BJ (cell line): ENCODE measurements at regions of chr17 and their contacts with region 1.

Region 1: DNA sequence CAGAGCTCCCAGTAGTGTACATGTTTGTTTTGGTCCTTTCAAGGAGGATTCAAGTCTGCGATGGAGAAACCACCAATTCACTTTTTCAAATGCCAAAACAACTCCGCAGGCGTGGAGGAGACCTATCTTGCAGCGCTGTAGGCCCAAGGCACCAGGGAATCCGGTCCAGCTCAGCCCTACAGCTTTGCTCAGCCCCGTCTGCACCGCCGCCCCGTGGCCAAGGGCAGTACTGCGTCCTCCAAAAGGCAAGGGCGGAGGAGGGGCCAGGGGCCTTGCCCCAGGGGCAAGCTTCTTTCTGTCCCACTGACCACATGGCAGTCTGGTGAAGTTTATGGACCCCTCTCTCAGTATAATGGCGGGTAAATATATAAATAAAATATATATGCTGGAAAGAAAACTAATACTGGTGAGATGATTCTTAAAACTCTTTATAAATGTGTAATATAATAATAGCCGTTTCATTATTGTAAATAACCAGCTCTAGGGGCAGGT is 709 bp upstream of the CD300LG start:
- DNase-seq: no peak
- H3K4me3 ChIP-seq: no peak overlapping the region
- H3K27me3 ChIP-seq: peaks cover 10% of the 10 kb centered on the region
- CTCF ChIP-seq: peak; percentile 100

Region 2: GRCh38 chr17:43766413-43767052 is 79.7 kb before region 1 on chr17:
- CTCF ChIA-PET with region 1: interaction called, 24 read pairs
- POLR2A ChIA-PET with region 1: no interaction called
- DNase-seq: no peak
- H3K4me3 ChIP-seq: no peak overlapping the region
- H3K27me3 ChIP-seq: no peaks in the 10 kb centered on the region
- CTCF ChIP-seq: peak; percentile 86

Region 3: DNA sequence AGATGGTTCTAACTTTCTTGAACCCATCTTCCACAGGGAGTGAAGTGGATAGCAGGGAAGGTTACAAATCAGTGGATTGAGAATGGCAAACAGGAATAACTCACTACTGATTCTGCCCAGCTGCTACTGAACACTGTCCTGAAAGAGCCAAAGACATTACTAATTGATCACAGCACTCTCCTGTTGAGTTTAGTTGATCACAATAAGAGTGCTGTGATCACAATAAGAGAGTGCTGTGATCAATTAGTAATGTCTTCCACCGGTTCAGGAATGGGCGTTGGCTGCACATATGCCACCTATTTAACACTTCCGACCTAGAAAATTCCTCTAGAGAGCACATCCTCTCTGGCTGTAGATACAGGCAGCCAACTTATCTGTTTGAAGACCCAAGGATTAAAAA is 54.7 kb before region 1 on chr17:
- CTCF ChIA-PET with region 1: interaction called, 13 read pairs
- POLR2A ChIA-PET with region 1: no interaction called
- DNase-seq: no peak
- H3K4me3 ChIP-seq: no peak overlapping the region
- H3K27me3 ChIP-seq: peaks cover 5% of the 10 kb centered on the region
- CTCF ChIP-seq: no peak

Region 4: DNA sequence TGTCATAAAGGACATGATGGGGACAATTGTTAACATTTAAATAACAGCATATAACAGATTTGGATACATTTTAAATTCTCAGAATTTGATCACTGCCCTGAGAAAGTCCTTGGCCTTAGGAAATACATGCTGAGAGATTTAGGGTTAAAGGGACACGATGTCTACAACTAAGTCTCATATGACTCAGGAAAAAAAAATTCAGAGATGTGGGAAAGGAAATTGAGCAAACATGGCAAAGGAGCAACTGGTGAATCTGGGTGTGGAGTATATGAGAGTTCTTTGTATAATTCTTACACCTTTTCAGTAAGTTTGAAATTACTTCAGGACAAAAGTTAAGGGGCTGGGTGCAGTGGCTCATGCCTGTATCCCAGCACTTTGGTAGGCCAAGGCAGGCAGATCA is 31.6 kb before region 1 on chr17:
- CTCF ChIA-PET with region 1: interaction called, 10 read pairs
- POLR2A ChIA-PET with region 1: interaction called, 5 read pairs
- DNase-seq: peak; percentile 53
- H3K4me3 ChIP-seq: no peak overlapping the region
- H3K27me3 ChIP-seq: no peaks in the 10 kb centered on the region
- CTCF ChIP-seq: no peak

Region 5: DNA sequence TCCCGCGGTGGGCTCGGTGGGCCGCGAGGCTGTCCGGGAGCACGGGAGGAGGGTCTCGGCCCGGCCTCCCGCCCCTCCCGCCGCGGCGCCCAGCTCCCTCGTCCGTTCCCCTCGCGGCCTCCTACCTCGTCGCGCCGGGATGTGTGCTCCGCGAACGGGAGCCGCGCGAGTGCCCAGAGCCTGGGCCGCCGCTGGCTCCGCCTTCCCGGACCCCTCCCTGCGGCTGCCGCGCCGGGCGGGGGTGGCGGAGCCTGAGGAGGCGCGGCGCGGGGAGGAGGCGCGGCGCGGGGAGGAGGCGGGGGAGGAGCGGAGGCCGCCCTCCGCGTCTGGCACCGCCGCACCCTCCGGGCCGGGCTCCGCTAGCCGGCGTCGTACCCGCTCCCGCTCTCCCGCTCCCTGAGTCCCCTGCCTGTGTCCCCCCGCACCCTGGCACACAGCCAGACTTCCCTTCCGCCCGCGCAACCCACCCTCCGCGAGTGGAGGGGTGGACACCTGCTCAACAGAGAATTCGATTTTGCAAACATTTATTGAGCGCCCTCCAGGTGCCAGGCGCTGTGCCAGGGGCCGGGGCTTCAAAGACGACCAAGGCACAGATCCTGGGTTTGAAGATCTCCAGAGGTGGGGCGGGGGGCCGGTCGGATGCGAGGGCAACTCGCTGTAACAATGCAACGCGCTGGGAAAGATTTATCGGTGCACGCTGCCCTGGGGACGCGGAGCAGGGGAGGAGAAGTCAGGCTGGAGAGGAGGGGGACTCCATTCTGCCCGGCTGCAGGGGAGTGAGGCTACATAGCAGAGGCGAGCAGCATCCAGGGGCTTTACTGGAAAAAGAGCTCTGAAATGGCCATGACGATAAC is 13.1 kb before region 1 on chr17 and contains the start of gene MPP3:
- CTCF ChIA-PET with region 1: interaction called, 15 read pairs
- POLR2A ChIA-PET with region 1: no interaction called
- DNase-seq: no peak
- H3K4me3 ChIP-seq: peak within 1 kb of the TSS; percentile 64
- H3K27me3 ChIP-seq: no peaks in the 10 kb centered on the region
- CTCF ChIP-seq: no peak
- polyA plus RNA-seq, gene MPP3: 4.6 and 7.9 TPM in 2 replicates

Region 6: DNA sequence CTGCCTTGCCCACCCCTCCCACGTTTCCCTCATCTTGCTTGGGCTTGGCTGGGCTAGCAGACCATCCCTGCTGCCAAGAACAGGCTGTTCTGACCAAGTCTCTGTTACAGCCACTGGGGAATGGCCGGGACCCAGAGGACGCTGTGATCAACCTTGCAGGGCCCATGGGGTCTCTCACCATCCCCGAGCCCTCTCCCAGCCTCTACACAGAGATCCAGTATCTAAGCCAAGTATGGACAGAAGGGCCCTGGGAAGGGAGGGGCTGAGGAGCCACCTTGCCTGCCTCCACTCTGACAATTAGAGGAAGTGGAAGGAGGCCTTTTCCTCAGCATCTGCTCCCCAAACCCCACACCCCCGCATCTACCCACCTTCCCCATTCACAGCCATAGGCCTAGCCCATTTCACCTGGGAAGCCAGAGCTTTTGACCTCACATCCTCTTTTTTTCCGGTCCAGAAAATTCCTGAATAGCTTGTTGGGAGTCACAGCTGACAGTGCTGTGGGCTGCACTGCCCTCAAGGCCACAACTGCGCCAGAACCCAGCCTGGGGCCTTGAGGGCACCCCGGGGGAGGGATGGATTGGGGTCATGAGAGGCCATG is 14.9 kb after region 1 on chr17:
- CTCF ChIA-PET with region 1: interaction called, 63 read pairs
- POLR2A ChIA-PET with region 1: no interaction called
- DNase-seq: no peak
- H3K4me3 ChIP-seq: no peak overlapping the region
- H3K27me3 ChIP-seq: peaks cover 34% of the 10 kb centered on the region
- CTCF ChIP-seq: no peak